Calu3 (cell line): ENCODE measurements at regions of chr2 and their contacts with region 1.

Region 1: DNA sequence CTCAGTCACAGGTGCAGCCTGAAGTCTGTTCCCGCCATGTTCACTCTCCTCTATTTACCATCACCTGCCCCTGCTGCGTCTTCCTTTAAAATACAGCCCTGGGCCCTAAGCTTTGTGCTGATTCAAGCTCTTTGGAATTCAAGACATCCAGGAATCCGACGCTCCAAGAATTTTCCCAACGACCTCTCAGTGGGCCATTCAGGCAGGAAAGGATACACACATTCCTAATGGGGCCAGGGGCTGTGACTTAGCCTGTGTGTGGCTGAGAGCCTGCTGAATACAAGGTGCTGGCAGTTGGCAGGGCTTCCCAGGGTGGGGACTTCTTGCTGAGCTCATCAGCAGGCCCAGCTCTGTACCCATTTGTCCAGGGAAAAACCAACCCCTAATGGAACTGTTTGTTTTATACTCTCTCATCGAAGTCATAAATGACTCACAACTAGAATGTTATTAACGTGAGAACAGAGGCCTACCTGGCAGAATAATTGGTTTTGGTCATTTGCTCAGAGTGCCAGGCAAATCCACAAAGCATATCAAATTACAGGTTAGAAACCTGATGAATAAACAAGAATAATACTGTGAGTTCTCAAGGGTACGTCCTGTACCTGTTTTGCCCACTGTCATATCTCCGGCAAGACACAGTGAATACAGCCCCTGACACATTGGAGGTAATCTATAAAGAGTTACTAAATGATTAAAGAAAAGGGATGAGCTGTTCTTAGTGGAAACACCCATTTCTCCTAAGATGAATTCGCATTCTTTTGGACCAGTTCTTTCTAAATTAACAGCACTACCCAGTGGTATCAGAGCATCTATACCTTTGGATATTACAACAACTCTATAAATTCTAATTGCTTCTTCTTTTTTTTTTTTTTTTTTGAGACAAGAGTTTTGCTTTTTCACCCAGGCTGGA is 12.6 kb upstream of the KCMF1 start:
- DNase-seq: peak; percentile 81
- H3K4me3 Mint-ChIP-seq: peak overlapping the region; percentile 55
- H3K27ac Mint-ChIP-seq: peak overlapping the region; percentile 95
- H3K4me1 Mint-ChIP-seq: peaks cover 40% of the 10 kb centered on the region
- H3K27me3 Mint-ChIP-seq: no peaks in the 10 kb centered on the region
- CTCF ChIP-seq: no peak

Region 2: GRCh38 chr2:84946204-84947009 is 12.0 kb before region 1 on chr2:
- CTCF ChIA-PET with region 1: interaction called, 26 read pairs
- intact Hi-C with region 1: no loop called
- DNase-seq: peak; percentile 87
- H3K4me3 Mint-ChIP-seq: peak overlapping the region; percentile 35
- H3K27ac Mint-ChIP-seq: peak overlapping the region; percentile 95
- H3K4me1 Mint-ChIP-seq: peaks cover 31% of the 10 kb centered on the region
- H3K27me3 Mint-ChIP-seq: no peaks in the 10 kb centered on the region
- CTCF ChIP-seq: no peak

Region 3: DNA sequence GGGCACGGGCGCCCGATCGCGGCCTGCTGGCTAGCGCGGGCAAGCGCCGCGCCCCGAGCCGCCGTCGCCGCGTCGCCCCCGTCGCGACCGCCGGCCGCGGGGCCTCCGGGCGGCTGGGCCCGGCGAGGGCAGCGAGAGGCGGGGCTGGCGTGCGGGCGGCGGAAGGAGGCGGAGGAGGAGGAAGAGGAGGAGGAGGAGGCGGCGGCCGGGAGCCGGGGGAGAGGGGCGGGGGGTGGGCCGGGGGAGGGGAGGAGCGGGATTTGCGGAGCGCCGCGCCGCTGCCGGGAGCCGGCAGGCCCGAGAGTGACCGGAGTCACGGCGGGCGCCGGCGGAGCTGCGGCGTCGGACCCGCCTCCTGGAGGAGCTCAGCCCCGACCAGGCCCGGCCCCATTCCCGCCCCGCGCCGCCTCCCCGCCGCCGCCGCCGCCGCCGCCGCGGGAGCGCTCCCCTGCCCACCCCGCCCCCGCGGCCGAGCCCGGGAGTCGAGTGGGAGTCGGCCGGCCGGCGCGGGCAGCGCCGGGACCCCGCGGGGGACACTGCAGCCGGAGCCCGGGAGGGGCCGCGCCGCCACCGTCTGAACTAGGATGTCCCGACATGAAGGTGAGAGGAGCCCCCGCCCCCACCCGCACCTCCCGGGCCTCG is 12.6 kb after region 1 on chr2 and contains the start of gene KCMF1:
- CTCF ChIA-PET with region 1: interaction called, 25 read pairs
- intact Hi-C with region 1: no loop called
- DNase-seq: peak; percentile 84
- H3K4me3 Mint-ChIP-seq: peak within 1 kb of the TSS; percentile 71
- H3K27ac Mint-ChIP-seq: peak within 1 kb of the TSS; percentile 99
- H3K4me1 Mint-ChIP-seq: peaks cover 19% of the 10 kb centered on the region
- H3K27me3 Mint-ChIP-seq: no peaks in the 10 kb centered on the region
- CTCF ChIP-seq: no peak
- total RNA-seq, gene KCMF1: 68.0 and 69.8 TPM in 2 replicates